Vagina (tissue), 2 donors: ENCODE measurements at regions of chr5 and their contacts with region 1.

Region 1: DNA sequence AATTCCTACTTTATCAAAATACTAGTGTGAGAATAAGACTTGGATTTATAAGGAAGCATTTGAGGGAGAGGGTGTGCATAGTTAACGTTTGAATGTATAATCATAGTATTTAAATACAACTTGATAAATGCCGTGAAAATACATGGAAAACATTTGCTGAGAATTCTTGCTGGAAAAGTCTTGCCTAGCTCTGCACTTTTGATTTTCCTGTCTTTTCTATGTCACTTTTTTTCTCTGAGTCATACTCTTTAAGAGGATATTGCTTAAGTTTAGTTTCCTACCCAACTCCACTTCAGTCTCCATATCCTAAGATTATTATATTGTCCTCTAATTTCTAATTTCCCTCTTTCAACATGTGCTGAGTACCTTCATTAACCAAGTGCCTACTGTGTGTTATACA is 616.6 kb upstream of the SEMA6A start:
- DNase-seq: no peak
- H3K4me3 ChIP-seq: no peak overlapping the region
- H3K27ac ChIP-seq: no peak overlapping the region
- H3K4me1 ChIP-seq: no peaks in the 10 kb centered on the region
- H3K27me3 ChIP-seq: no peaks in the 10 kb centered on the region
- CTCF ChIP-seq: no peak
- POLR2A ChIP-seq: no peak

Region 2: GRCh38 chr5:117302949-117303348 is 111.7 kb after region 1 on chr5:
- intact Hi-C with region 1: no loop called
- DNase-seq: no peak
- H3K4me3 ChIP-seq: no peak overlapping the region
- H3K27ac ChIP-seq: no peak overlapping the region
- H3K4me1 ChIP-seq: no peaks in the 10 kb centered on the region
- H3K27me3 ChIP-seq: no peaks in the 10 kb centered on the region
- CTCF ChIP-seq: no peak
- POLR2A ChIP-seq: no peak

Region 3: DNA sequence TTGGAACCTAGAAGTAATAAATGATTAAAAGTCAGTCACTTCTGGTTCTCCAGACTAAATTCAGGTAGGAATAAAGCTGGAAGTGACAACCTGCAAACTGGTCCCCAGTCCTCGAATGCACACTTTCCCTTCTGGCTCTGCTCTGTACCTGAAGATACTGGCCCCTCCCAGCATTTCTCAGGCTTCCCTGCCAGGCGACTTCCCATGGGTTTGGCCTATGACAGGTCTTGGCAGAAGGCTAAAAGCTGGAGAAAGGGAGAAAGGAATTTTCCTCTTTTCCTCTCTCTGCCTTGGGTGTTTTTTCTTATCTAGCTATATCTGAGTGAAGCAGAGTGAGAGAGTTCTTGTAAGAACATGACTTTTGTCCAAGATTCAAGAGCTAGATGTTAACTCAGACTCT is 791.4 kb after region 1 on chr5:
- intact Hi-C with region 1: loop called (anchors 5 kb)
- DNase-seq: no peak
- H3K4me3 ChIP-seq: no peak overlapping the region
- H3K27ac ChIP-seq: no peak overlapping the region
- H3K4me1 ChIP-seq: no peaks in the 10 kb centered on the region
- H3K27me3 ChIP-seq: no peaks in the 10 kb centered on the region
- CTCF ChIP-seq: no peak
- POLR2A ChIP-seq: no peak